Activated T-helper 2 cell treated with anti-CD3 and anti-CD28 coated beads, Interferon-gamma antibody, Interleukin-2, Interleukin-4, amounts not matched to agents 10 μg/mL and 5 μg/mL and 100 μg/mL, durations not matched to agents 14 hours and 24 hours and 36 hours (primary cell): ENCODE measurements at regions of chr14 and their contacts with region 1.

Region 1: GRCh38 chr14:89509891-89510290 is 92.9 kb upstream of the FOXN3 start:
- DNase-seq: no peak
- H3K4me3 Mint-ChIP-seq: peak overlapping the region; percentile 74
- H3K27ac Mint-ChIP-seq: peak overlapping the region; percentile 96
- H3K4me1 Mint-ChIP-seq: peaks cover 58% of the 10 kb centered on the region
- H3K27me3 Mint-ChIP-seq: no peaks in the 10 kb centered on the region

Region 2: GRCh38 chr14:89351516-89352404 is 158.1 kb before region 1 on chr14:
- intact Hi-C with region 1: no loop called
- DNase-seq: no peak
- H3K4me3 Mint-ChIP-seq: peak overlapping the region; percentile 76
- H3K27ac Mint-ChIP-seq: peak overlapping the region; percentile 88
- H3K4me1 Mint-ChIP-seq: peaks cover 41% of the 10 kb centered on the region
- H3K27me3 Mint-ChIP-seq: no peaks in the 10 kb centered on the region

Region 3: DNA sequence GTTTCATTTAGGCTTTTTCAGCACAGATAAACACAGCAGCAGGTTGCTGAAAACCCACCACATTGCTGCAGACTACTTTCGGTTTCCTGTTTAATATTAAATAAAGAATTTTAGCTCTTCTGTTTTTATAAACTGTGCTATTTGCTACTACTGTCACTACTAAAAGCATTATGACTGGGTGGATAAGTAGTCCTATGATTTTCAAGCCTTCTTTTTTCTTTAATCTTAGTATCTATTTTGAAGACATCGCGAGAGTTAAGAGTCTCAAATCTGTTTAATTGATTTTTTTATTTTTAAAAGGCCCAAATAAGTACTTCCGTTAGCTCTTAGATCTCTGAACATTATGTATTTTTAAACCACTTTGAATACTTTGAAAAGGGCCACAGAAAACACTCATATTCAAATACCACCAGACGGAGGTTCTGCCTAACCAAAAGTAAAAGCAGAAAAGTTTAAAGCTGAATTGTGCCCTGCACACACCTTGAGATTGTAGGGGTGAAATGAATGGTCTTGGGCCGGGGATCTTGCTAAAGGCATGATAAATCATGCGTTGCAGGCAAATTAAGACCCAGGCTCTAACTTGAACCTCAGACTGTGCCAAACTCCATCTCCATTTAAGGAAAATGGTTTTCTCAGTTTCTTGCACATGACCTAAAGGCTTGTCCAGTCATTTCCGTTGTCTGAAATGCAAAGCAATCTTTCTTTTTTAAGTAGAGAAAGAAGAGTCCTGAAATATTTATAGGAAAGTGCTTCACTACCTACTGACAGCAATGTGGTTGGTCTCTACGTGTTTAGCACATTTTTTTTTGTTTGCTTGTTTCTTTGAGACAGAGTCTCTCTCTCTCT is 79.3 kb before region 1 on chr14:
- intact Hi-C with region 1: loop called (anchors 1 kb)
- DNase-seq: peak; percentile 52
- H3K4me3 Mint-ChIP-seq: peak overlapping the region; percentile 84
- H3K27ac Mint-ChIP-seq: peak overlapping the region; percentile 94
- H3K4me1 Mint-ChIP-seq: peaks cover 59% of the 10 kb centered on the region
- H3K27me3 Mint-ChIP-seq: no peaks in the 10 kb centered on the region

Region 4: DNA sequence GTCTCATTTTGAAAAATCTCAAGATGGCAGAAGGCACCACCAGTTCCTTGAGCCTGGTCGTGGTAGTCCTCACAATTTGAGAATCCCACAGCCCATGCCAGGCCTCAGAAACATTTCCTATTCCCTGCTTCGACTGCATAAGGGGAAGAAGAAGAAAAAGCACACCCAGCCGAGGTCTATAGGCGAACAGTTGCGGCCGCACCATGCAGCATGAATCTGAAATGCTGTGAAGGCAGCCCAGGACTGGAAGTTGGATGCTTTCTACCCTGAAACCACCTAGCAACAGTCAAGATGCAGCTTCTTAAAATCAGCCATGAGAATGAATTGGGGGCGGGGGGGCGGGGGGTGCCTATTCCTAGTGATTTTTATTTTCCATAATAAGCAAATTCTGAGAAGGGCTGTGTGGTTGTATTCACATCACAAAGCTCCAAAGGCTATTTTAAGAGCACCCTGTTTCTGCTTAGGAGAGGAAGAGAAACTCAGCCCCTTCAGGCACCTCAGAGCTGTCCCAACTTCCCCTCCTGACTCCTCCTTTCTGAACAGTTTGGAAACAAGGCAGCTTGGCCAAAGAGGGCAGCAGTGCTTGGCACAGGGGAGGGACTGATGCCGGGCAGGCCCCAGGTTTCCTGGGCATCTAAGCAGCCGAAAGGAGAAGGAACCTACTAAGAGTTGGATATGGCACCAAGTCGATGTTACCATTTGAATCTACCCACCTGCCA is 79.7 kb after region 1 on chr14:
- intact Hi-C with region 1: loop called (anchors 2 kb)
- DNase-seq: no peak
- H3K4me3 Mint-ChIP-seq: no peak overlapping the region
- H3K27ac Mint-ChIP-seq: peak overlapping the region; percentile 36
- H3K4me1 Mint-ChIP-seq: peaks cover 59% of the 10 kb centered on the region
- H3K27me3 Mint-ChIP-seq: no peaks in the 10 kb centered on the region